Naive thymus-derived CD4-positive, alpha-beta T cell (primary cell): ENCODE measurements at regions of chr9 and their contacts with region 1.

Region 1: DNA sequence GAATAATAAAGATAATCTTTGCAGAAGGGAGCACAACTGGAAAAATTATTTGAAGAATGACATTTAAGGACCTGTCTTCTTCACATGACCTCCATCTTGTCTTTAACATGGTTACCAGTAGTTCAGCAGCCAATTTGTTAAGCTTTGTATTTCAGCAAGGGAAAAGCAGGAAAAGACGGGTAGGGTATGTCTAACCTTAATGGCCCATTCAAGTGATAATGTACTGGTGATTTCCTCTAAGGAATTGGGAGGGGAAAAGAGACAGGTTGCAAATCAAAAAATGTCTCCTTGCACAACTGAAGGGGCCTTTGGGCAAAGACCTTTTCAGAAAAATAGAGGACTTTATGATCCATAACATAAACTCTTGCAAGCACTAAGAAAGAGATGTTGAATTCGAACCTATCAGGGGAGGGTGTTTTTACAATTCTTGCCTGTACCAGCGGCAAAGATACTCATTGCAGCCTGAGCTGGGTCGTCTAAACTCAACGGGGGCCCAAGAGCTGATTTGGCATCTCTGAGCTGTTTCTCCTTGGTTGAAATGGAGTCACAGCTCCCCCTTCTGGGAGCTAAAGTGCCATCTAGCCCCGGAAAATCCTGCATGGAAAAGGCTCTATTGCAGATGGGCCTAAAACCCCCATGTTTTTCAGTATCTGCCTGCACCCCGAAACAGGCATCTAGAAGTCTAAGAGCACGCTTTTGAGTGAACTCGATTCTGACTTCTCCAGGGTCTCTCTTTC is 3.8 kb downstream of the BRINP1 start:
- DNase-seq: no peak
- ATAC-seq: no peak
- H3K4me3 ChIP-seq: no peak overlapping the region
- H3K4me3 Mint-ChIP-seq: no peak overlapping the region
- H3K27ac ChIP-seq: no peak overlapping the region
- H3K27ac Mint-ChIP-seq: no peak overlapping the region
- H3K4me1 ChIP-seq: no peaks in the 10 kb centered on the region
- H3K4me1 Mint-ChIP-seq: peaks cover 0 to 4% (median 0%) of the 10 kb centered on the region in 7 donors
- H3K27me3 ChIP-seq: no peaks in the 10 kb centered on the region
- H3K27me3 Mint-ChIP-seq: peaks cover 27 to 48% (median 42%) of the 10 kb centered on the region in 5 donors

Region 2: GRCh38 chr9:117644133-117644931 is 1721.1 kb before region 1 on chr9:
- CTCF ChIA-PET with region 1: no interaction called
- POLR2A ChIA-PET with region 1: no interaction called
- intact Hi-C with region 1: loop called in 1 of 2 experiments (anchors 10 kb)
- DNase-seq: peak; percentile 8 to 58 (median 19)
- ATAC-seq: peak; percentile 85
- H3K4me3 ChIP-seq: no peak overlapping the region
- H3K4me3 Mint-ChIP-seq: peak overlapping the region in 6 of 10 donors; percentile 4 to 65 (median 31)
- H3K27ac ChIP-seq: no peak overlapping the region
- H3K27ac Mint-ChIP-seq: peak overlapping the region in 1 of 9 donors; percentile 19
- H3K4me1 ChIP-seq: no peaks in the 10 kb centered on the region
- H3K4me1 Mint-ChIP-seq: peaks cover 5 to 12% (median 9%) of the 10 kb centered on the region in 7 donors
- H3K27me3 ChIP-seq: peaks cover 0 to 3% of the 10 kb centered on the region in 2 donors
- H3K27me3 Mint-ChIP-seq: peaks cover 28 to 57% (median 39%) of the 10 kb centered on the region in 5 donors